A549 (cell line): ENCODE measurements at regions of chr2 and their contacts with region 1.

Region 1: DNA sequence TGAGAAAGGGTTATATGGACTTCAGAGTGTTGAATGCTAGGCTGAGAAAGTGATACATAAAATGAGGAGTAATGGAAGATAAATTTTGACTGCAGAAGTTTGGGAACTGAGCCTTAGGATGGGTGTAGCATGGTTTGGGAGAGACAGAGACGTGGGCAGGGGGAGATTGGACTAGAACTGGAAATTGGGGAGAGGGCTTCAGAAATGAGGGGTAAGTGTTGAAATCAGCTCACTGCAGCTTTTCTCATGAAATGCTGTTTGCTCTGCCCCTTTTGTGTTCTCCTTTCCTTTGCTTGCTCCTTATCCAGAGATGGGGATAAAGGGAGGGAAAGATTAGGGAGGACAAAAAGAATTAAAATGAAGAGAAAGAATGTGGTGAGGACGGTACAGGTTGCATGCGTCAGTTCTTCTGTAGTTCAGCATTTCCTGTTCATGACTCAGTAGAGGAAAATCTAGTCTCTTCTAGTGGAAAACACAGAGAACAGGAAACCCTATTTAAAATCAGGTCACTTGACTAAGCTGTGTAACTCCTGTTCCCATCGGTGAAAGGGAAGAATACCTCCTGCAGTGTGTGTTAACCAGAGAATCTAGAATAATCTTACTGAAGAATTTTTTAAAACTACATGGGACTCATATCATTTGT is 105.6 kb downstream of the CRIM1 start:
- DNase-seq: peak; percentile 28 to 82
- ATAC-seq: peak; percentile 72
- H3K4me3 ChIP-seq: no peak overlapping the region; the same call in 2 of the 3 replicates
- H3K27ac ChIP-seq: peak overlapping the region; percentile 80 to 87
- H3K4me1 ChIP-seq: peaks cover 91% of the 10 kb centered on the region
- CTCF ChIP-seq: no peak
- EP300 ChIP-seq: peak; percentile 45 to 76; a peak in 3 of 5 replicates
- POLR2A ChIP-seq: no peak
- RAD21 ChIP-seq: peak in 1 of 2 experiments; percentile 32; a peak in 1 of 5 replicates

Region 2: GRCh38 chr2:36333350-36333972 is 127.7 kb before region 1 on chr2:
- CTCF ChIA-PET with region 1: interaction called, 10 read pairs
- POLR2A ChIA-PET with region 1: no interaction called
- DNase-seq: peak in 1 of 2 experiments; percentile 56
- ATAC-seq: peak in 1 of 2 experiments; percentile 71; a peak in 3 of 6 replicates
- H3K4me3 ChIP-seq: no peak overlapping the region
- H3K27ac ChIP-seq: no peak overlapping the region
- H3K4me1 ChIP-seq: peaks cover 35% of the 10 kb centered on the region
- CTCF ChIP-seq: peak; percentile 34; the same call in 2 of the 3 replicates
- EP300 ChIP-seq: no peak
- POLR2A ChIP-seq: no peak
- RAD21 ChIP-seq: peak; percentile 45 to 70; a peak in 4 of 5 replicates

Region 3: DNA sequence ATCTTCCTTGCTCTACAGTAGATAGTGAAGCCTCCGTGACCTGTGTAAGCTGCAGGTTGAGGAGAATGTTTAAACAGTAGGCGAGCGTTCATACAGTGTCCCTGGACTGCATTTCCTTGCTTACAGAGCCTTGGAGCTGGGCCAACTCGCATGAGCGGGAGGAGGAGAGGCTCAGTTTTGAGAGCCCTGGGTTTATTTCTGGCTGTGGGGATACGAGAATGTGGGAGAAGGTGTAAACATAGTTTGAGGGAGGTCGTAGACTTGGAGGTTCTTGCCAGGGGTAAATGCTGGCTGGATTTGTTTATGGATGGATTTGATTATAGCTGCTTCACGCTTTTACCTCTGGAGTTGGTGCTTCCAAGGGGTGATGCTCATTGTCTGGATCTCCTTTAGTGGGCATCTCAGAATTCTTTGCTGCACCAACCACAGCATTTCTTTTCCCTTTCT is 84.8 kb before region 1 on chr2:
- CTCF ChIA-PET with region 1: interaction called, 26 read pairs
- POLR2A ChIA-PET with region 1: interaction called, 4 read pairs
- DNase-seq: peak in 1 of 2 experiments; percentile 77
- ATAC-seq: peak; percentile 16 to 25; a peak in 4 of 6 replicates
- H3K4me3 ChIP-seq: peak overlapping the region; percentile 17
- H3K27ac ChIP-seq: peak overlapping the region; percentile 75 to 84
- H3K4me1 ChIP-seq: peaks cover 100% of the 10 kb centered on the region
- CTCF ChIP-seq: no peak
- EP300 ChIP-seq: no peak
- POLR2A ChIP-seq: no peak
- RAD21 ChIP-seq: no peak

Region 4: DNA sequence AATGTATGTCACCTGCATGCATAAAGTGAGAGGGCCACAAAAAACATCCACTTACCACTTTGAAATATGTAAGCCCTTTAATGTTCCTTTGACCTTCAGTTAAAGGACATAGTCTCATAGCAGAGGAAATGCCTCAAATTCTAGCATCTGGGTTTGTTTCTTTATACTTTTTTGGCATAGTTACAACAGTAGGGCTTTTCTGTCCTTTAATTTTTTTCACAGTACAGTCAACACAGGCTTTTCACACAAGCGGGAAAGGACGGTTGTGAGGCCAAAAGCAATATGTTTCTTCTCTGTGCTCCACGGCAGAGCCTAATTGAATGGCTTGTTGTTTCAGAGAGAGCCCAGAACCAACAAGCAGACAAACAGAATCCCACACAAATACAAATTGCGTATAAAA is 47.9 kb before region 1 on chr2:
- CTCF ChIA-PET with region 1: interaction called, 16 read pairs
- POLR2A ChIA-PET with region 1: no interaction called
- DNase-seq: no peak
- ATAC-seq: no peak
- H3K4me3 ChIP-seq: no peak overlapping the region
- H3K27ac ChIP-seq: peak overlapping the region; percentile 25 to 92; a peak in 4 of 6 replicates
- H3K4me1 ChIP-seq: peaks cover 100% of the 10 kb centered on the region
- CTCF ChIP-seq: no peak
- EP300 ChIP-seq: no peak
- POLR2A ChIP-seq: no peak
- RAD21 ChIP-seq: no peak

Region 5: GRCh38 chr2:36450466-36451196 is 10.5 kb before region 1 on chr2:
- CTCF ChIA-PET with region 1: interaction called, 53 read pairs
- POLR2A ChIA-PET with region 1: no interaction called
- DNase-seq: no peak
- ATAC-seq: peak in 1 of 2 experiments; percentile 16; a peak in 3 of 6 replicates
- H3K4me3 ChIP-seq: peak overlapping the region; percentile 3; the same call in 1 of the 3 replicates
- H3K27ac ChIP-seq: peak overlapping the region; percentile 36 to 75
- H3K4me1 ChIP-seq: peaks cover 98% of the 10 kb centered on the region
- CTCF ChIP-seq: no peak
- EP300 ChIP-seq: no peak
- POLR2A ChIP-seq: no peak
- RAD21 ChIP-seq: no peak

Region 6: GRCh38 chr2:36492216-36492945 is 31.2 kb after region 1 on chr2:
- CTCF ChIA-PET with region 1: interaction called, 30 read pairs
- POLR2A ChIA-PET with region 1: no interaction called
- DNase-seq: peak in 1 of 2 experiments; percentile 40
- ATAC-seq: peak in 1 of 2 experiments; percentile 7; a peak in 1 of 6 replicates
- H3K4me3 ChIP-seq: no peak overlapping the region
- H3K27ac ChIP-seq: peak overlapping the region; percentile 4 to 63; a peak in 3 of 6 replicates
- H3K4me1 ChIP-seq: peaks cover 80% of the 10 kb centered on the region
- CTCF ChIP-seq: no peak
- EP300 ChIP-seq: no peak
- POLR2A ChIP-seq: no peak
- RAD21 ChIP-seq: no peak